ENCODE measurements at regions of chr4 and their contacts with region 1.

Region 1: GRCh38 chr4:184395971-184396391 is 78.4 kb downstream of the IRF2 start:
- DNase-seq: no peak
- H3K4me3 ChIP-seq: no peak overlapping the region
- H3K27ac ChIP-seq: no peak overlapping the region
- H3K4me1 ChIP-seq: peaks cover 29% of the 10 kb centered on the region
- H3K27me3 ChIP-seq: no peaks in the 10 kb centered on the region
- CTCF ChIP-seq: no peak
- POLR2A ChIP-seq: no peak

Region 2: DNA sequence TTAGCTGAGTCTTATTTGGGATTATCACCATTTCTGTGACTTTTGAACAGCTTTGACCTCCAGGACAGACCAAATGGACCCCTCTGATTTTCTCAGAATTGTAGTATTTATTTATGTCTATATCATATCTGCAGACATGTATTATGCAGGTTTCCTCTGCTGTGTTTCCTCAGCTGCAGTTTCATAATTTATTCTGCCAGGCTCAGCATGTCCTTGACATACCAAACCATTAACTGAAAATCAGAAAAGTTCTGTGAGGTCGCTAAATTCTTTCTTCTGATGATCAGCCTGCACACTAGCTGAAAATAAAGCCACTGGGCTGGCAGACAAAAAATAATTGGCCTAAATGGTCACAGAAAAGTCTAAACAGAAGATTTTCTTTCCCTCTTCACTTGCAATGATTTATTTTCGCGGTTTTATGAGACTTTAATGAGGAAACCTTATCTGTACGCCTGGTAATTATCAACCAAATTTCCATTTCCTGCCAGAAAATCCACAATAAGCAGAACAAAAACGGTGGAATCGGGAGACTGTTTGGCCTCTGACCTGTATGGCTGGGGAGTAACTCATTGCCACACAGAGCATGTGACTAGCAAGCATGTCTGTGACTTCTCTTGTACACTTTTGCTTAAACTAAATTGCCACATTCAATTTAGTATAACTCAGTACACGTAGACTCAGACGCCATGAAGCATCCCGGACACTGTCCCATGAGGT is 329.2 kb before region 1 on chr4:
- intact Hi-C with region 1: no loop called
- DNase-seq: no peak
- H3K4me3 ChIP-seq: no peak overlapping the region
- H3K27ac ChIP-seq: no peak overlapping the region
- H3K4me1 ChIP-seq: peaks cover 9% of the 10 kb centered on the region
- H3K27me3 ChIP-seq: no peaks in the 10 kb centered on the region
- CTCF ChIP-seq: no peak
- POLR2A ChIP-seq: no peak

Region 3: GRCh38 chr4:184343502-184344177 is 52.3 kb before region 1 on chr4:
- intact Hi-C with region 1: loop called (anchors 10 kb)
- DNase-seq: peak; percentile 85
- H3K4me3 ChIP-seq: peak overlapping the region; percentile 56 to 66
- H3K27ac ChIP-seq: peak overlapping the region; percentile 68 to 74
- H3K4me1 ChIP-seq: peaks cover 40% of the 10 kb centered on the region
- H3K27me3 ChIP-seq: no peaks in the 10 kb centered on the region
- CTCF ChIP-seq: no peak
- POLR2A ChIP-seq: no peak

Region 4: GRCh38 chr4:184474263-184475095 is 78.5 kb after region 1 on chr4 and contains the start of gene IRF2:
- intact Hi-C with region 1: loop called (anchors 10 kb)
- DNase-seq: peak; percentile 96
- H3K4me3 ChIP-seq: peak within 1 kb of the TSS; percentile 85 to 94
- H3K27ac ChIP-seq: peak within 1 kb of the TSS; percentile 94 to 97
- H3K4me1 ChIP-seq: peaks cover 36% of the 10 kb centered on the region
- H3K27me3 ChIP-seq: no peaks in the 10 kb centered on the region
- CTCF ChIP-seq: peak in 2 of 3 experiments; percentile 4 to 21
- POLR2A ChIP-seq: peak; percentile 35
- total RNA-seq, gene IRF2: 16.1 to 22.3 TPM

Region 5: DNA sequence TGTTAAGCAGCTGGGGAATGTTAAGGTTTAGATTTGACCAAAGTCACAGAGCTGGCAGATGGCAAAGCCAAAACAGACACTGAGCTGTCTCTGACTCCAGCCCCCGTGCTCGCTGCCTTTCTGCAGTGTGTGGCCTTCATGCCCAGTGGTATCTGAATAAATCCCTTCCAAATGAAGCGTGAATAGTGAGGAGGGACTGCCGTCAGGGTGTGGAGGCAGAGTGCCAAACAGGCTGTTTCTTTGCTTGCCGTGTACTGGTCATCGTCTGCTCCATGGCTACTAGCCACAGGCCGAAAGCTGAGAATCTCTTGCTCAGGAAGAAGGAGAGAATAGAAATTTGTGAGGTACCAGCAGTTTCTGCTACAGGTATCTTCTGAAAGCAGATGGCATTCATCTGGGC is 273.3 kb after region 1 on chr4:
- intact Hi-C with region 1: no loop called
- DNase-seq: no peak
- H3K4me3 ChIP-seq: no peak overlapping the region
- H3K27ac ChIP-seq: no peak overlapping the region
- H3K4me1 ChIP-seq: no peaks in the 10 kb centered on the region
- H3K27me3 ChIP-seq: no peaks in the 10 kb centered on the region
- CTCF ChIP-seq: no peak
- POLR2A ChIP-seq: no peak